ENCODE measurements at regions of chr14 and their contacts with region 1.

Region 1: DNA sequence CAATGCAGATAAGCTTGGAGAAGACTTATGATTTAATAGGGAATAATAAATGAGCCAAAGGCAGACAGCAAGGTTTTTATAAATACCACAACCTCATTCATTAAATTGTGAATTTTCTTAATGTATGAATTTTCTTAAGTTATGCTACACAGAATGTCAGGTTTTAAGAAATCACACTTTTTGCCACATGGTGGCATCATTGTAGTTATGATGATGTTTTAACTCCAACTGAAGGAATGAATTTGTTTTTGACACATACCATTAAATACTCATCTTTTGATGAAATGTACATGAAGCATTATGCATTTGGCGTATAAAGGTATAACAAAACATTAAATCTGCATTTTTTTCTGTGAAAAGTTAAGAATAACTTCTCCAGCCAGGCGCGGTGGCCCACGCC is 524.1 kb upstream of the FBXO33 start:
- DNase-seq: no peak
- H3K4me3 ChIP-seq: no peak overlapping the region
- H3K4me3 Mint-ChIP-seq: no peak overlapping the region
- H3K27ac Mint-ChIP-seq: no peak overlapping the region
- H3K4me1 ChIP-seq: no peaks in the 10 kb centered on the region
- H3K4me1 Mint-ChIP-seq: no peaks in the 10 kb centered on the region
- H3K27me3 ChIP-seq: no peaks in the 10 kb centered on the region
- H3K27me3 Mint-ChIP-seq: peaks cover 6% of the 10 kb centered on the region
- CTCF ChIP-seq: no peak

Region 2: DNA sequence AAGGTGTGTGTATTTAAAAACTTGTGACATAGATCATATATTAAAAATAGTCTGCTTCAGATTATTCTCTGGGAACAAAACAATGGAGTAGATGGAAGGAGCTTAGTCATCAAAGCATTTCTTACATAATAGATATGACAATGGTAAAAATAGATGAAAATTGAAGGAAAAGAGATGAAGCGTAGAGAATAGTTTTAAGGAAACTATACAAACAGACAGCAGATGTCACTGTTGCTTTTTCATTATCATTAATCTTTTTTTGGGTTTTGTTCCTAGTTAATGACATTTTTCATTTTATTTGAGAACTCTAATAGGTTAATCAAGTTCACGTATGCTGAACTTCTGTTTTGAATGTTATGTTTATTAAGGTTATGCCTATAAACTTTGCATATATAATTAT is 374.9 kb before region 1 on chr14:
- CTCF ChIA-PET with region 1: no interaction called
- POLR2A ChIA-PET with region 1: no interaction called
- intact Hi-C with region 1: loop called (anchors 10 kb)
- DNase-seq: no peak
- H3K4me3 ChIP-seq: no peak overlapping the region
- H3K4me3 Mint-ChIP-seq: no peak overlapping the region
- H3K27ac Mint-ChIP-seq: no peak overlapping the region
- H3K4me1 ChIP-seq: no peaks in the 10 kb centered on the region
- H3K4me1 Mint-ChIP-seq: no peaks in the 10 kb centered on the region
- H3K27me3 ChIP-seq: no peaks in the 10 kb centered on the region
- H3K27me3 Mint-ChIP-seq: peaks cover 3% of the 10 kb centered on the region
- CTCF ChIP-seq: no peak

Measured in Caco-2 (cell line).